Ascending aorta (tissue), 2 donors: ENCODE measurements at regions of chr3 and their contacts with region 1.

Region 1: DNA sequence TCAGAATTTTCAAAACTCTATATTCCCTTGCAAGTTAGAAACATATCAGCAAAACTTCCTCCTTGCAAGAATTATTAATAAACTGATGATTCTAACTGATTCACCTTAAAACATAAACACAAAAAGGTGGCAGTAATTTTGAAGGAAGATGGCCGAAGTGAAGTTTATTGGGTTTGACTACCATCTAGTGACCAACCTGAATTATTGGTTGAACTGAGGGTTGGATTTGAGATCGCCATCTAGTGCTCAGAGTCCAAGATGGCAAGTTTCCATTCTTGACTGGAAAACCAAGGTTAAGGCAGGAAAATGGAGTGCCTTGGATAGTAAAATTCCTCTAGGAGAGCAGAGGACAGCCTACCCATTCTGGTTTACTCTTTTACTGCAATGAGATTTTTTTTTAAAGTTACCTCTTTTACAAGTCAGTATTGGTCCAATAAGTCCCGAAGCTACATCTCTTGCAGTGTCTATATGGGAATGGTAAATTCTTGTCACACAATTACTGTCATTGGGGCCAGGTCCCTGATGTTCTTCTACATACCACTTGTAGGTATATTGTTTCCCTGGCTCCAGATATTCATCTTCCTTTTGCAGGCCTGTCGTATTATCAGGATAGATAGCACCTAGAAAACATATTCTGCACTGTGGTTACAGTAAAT is 51.6 kb upstream of the CP start:
- DNase-seq: peak in 1 of 2 donors; percentile 78
- H3K4me3 ChIP-seq: no peak overlapping the region
- H3K27ac ChIP-seq: no peak overlapping the region
- H3K4me1 ChIP-seq: peaks cover 0 to 6% of the 10 kb centered on the region in 2 donors
- H3K27me3 ChIP-seq: no peaks in the 10 kb centered on the region
- CTCF ChIP-seq: peak; percentile 90 to 95 (median 92)

Region 2: GRCh38 chr3:148847351-148847750 is 425.9 kb before region 1 on chr3:
- intact Hi-C with region 1: no loop called
- DNase-seq: no peak
- H3K4me3 ChIP-seq: no peak overlapping the region
- H3K27ac ChIP-seq: no peak overlapping the region
- H3K4me1 ChIP-seq: no peaks in the 10 kb centered on the region
- H3K27me3 ChIP-seq: no peaks in the 10 kb centered on the region
- CTCF ChIP-seq: no peak

Region 3: GRCh38 chr3:148861277-148861869 is 411.9 kb before region 1 on chr3:
- intact Hi-C with region 1: loop called (anchors 5 kb)
- DNase-seq: no peak
- H3K4me3 ChIP-seq: no peak overlapping the region
- H3K27ac ChIP-seq: no peak overlapping the region
- H3K4me1 ChIP-seq: no peaks in the 10 kb centered on the region
- H3K27me3 ChIP-seq: no peaks in the 10 kb centered on the region
- CTCF ChIP-seq: peak; percentile 32 to 72 (median 65)

Region 4: DNA sequence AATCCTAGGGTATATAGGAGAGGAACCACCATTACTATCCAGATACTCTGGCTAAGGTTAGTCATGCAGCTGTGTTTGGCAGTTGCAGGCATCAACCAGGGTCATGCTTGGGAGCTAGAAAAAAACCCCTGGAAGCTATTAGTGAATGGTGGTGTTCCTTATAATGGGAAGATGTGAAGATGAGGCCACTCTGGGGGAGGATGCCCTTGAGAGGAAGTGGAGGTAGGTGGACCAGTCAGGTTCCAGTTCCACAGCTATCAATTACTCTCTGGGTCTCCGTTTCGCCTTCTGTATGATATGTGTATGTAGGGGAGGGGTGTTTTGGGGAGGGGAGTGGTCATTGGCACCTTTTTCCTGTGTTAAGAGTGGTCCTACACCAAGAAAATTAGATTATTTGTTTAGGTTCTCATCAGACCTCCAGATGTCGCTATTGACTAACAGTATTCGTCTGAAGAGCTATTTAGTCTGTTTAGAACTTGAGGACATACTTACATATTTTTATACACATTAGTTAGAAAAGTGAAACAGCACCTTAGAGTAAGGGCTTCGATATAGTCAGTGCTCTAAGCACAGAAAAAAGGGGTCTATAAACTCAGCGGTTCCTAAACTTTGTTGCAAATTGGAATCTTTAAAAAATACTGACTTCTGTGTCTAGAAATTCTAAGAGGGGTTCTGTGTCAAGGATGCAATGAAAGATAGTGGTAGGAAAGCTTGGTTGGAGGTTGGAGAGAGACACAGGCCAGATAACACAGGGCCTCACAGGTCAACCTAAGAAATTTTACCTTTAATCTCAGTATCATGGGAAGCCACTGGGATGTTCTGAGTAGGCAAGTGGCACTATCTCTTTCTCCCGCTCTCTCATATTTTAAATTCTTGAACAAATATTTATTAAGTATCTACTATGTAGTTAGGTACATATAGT is 152.9 kb before region 1 on chr3:
- intact Hi-C with region 1: loop called (anchors 1 kb)
- DNase-seq: no peak
- H3K4me3 ChIP-seq: no peak overlapping the region
- H3K27ac ChIP-seq: no peak overlapping the region
- H3K4me1 ChIP-seq: peaks cover 0 to 3% of the 10 kb centered on the region in 2 donors
- H3K27me3 ChIP-seq: no peaks in the 10 kb centered on the region
- CTCF ChIP-seq: peak; percentile 51 to 71 (median 66)

Region 5: GRCh38 chr3:149424918-149425317 is 151.7 kb after region 1 on chr3:
- intact Hi-C with region 1: no loop called
- DNase-seq: no peak
- H3K4me3 ChIP-seq: no peak overlapping the region
- H3K27ac ChIP-seq: no peak overlapping the region
- H3K4me1 ChIP-seq: no peaks in the 10 kb centered on the region
- H3K27me3 ChIP-seq: no peaks in the 10 kb centered on the region
- CTCF ChIP-seq: no peak

Region 6: DNA sequence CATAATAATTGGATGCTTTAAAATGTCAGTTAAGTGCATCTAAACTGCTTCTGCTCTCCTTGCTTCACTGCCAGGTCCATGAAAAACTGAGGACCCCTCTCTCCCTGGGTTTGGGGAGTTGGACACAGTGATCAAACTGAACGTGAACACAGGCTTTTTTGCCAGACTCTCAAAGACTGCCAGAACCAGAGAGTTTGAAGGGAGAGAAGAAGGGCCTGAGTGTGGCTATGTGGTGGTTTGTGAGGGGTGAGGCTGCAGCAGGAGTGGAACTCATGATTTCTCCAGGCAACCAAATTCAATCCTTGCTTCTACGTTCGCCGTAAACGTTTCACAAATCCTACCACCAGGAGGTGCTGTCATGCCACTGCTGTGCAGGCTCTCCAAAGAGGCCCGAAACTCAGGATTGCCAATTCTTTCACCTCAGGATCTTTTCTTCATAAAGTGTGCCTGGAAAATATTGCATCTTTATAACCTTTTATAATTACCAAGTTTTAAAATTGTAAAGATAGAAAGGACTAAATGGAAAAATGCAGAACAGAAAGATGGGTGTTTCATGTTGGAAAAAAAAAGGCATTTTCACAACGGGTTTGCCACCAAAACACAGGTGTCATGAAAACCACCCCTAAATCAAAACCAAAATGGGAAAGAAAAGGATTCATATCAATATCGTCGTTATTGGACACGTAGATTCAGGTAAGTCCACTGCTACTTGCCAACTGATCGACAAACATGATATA is 221.0 kb after region 1 on chr3:
- intact Hi-C with region 1: loop called (anchors 5 kb)
- DNase-seq: peak in 1 of 2 donors; percentile 81
- H3K4me3 ChIP-seq: no peak overlapping the region
- H3K27ac ChIP-seq: no peak overlapping the region
- H3K4me1 ChIP-seq: peaks cover 0 to 4% of the 10 kb centered on the region in 2 donors
- H3K27me3 ChIP-seq: no peaks in the 10 kb centered on the region
- CTCF ChIP-seq: peak; percentile 75 to 89 (median 85)